ENCODE measurements at regions of chrX and their contacts with region 1.

Region 1: GRCh38 chrX:53093748-53094583 is at the start of gene KANTR:
- DNase-seq: peak; percentile 86
- ATAC-seq: peak; percentile 89
- H3K4me3 Mint-ChIP-seq: peak within 1 kb of the TSS; percentile 90
- H3K27ac Mint-ChIP-seq: peak within 1 kb of the TSS; percentile 91
- H3K4me1 Mint-ChIP-seq: peaks cover 19% of the 10 kb centered on the region
- H3K27me3 Mint-ChIP-seq: no peaks in the 10 kb centered on the region
- total RNA-seq, gene KANTR: 10.3 to 12.3 TPM

Region 2: GRCh38 chrX:52574416-52575275 is 519.3 kb before region 1 on chrX:
- CTCF ChIA-PET with region 1: no interaction called
- POLR2A ChIA-PET with region 1: no interaction called
- intact Hi-C with region 1: loop called in 1 of 2 experiments (anchors 5 kb)
- DNase-seq: peak; percentile 45
- ATAC-seq: no peak
- H3K4me3 Mint-ChIP-seq: no peak overlapping the region
- H3K27ac Mint-ChIP-seq: no peak overlapping the region
- H3K4me1 Mint-ChIP-seq: peaks cover 2% of the 10 kb centered on the region
- H3K27me3 Mint-ChIP-seq: no peaks in the 10 kb centered on the region

Region 3: GRCh38 chrX:53071604-53072417 is 22.2 kb before region 1 on chrX:
- CTCF ChIA-PET with region 1: interaction called, 5 read pairs
- POLR2A ChIA-PET with region 1: no interaction called
- intact Hi-C with region 1: loop called (anchors 1 kb)
- DNase-seq: peak; percentile 77
- ATAC-seq: peak; percentile 85
- H3K4me3 Mint-ChIP-seq: peak overlapping the region; percentile 87
- H3K27ac Mint-ChIP-seq: peak overlapping the region; percentile 89
- H3K4me1 Mint-ChIP-seq: peaks cover 10% of the 10 kb centered on the region
- H3K27me3 Mint-ChIP-seq: no peaks in the 10 kb centered on the region

Region 4: GRCh38 chrX:53081925-53082772 is 11.8 kb before region 1 on chrX and contains the start of gene TSPYL2:
- CTCF ChIA-PET with region 1: interaction called, 5 read pairs
- POLR2A ChIA-PET with region 1: interaction called, 6 read pairs
- intact Hi-C with region 1: loop called in 1 of 2 experiments (anchors 1 kb)
- DNase-seq: peak; percentile 96
- ATAC-seq: peak; percentile 91
- H3K4me3 Mint-ChIP-seq: peak within 1 kb of the TSS; percentile 91
- H3K27ac Mint-ChIP-seq: peak within 1 kb of the TSS; percentile 95
- H3K4me1 Mint-ChIP-seq: peaks cover 46% of the 10 kb centered on the region
- H3K27me3 Mint-ChIP-seq: no peaks in the 10 kb centered on the region
- total RNA-seq, gene TSPYL2: 56.7 to 73.3 TPM

Region 5: GRCh38 chrX:53190363-53190960 is 96.5 kb after region 1 on chrX:
- CTCF ChIA-PET with region 1: no interaction called
- POLR2A ChIA-PET with region 1: no interaction called
- intact Hi-C with region 1: loop called in 1 of 2 experiments (anchors 10 kb)
- DNase-seq: no peak
- ATAC-seq: no peak
- H3K4me3 Mint-ChIP-seq: no peak overlapping the region
- H3K27ac Mint-ChIP-seq: no peak overlapping the region
- H3K4me1 Mint-ChIP-seq: peaks cover 25% of the 10 kb centered on the region
- H3K27me3 Mint-ChIP-seq: no peaks in the 10 kb centered on the region

Region 6: GRCh38 chrX:53224860-53225797 is 131.2 kb after region 1 on chrX and contains the start of gene KDM5C:
- CTCF ChIA-PET with region 1: no interaction called
- POLR2A ChIA-PET with region 1: no interaction called
- intact Hi-C with region 1: loop called (anchors 1 to 5 kb)
- DNase-seq: peak; percentile 90
- ATAC-seq: peak; percentile 79
- H3K4me3 Mint-ChIP-seq: peak within 1 kb of the TSS; percentile 79
- H3K27ac Mint-ChIP-seq: peak within 1 kb of the TSS; percentile 92
- H3K4me1 Mint-ChIP-seq: peaks cover 29% of the 10 kb centered on the region
- H3K27me3 Mint-ChIP-seq: no peaks in the 10 kb centered on the region
- total RNA-seq, gene KDM5C: 84.6 to 96.5 TPM

Region 7: GRCh38 chrX:53433651-53434639 is 340.0 kb after region 1 on chrX and contains the start of gene HSD17B10:
- CTCF ChIA-PET with region 1: no interaction called
- POLR2A ChIA-PET with region 1: no interaction called
- intact Hi-C with region 1: no loop called
- DNase-seq: peak; percentile 93
- ATAC-seq: peak; percentile 95
- H3K4me3 Mint-ChIP-seq: peak within 1 kb of the TSS; percentile 98
- H3K27ac Mint-ChIP-seq: peak within 1 kb of the TSS; percentile 92
- H3K4me1 Mint-ChIP-seq: peaks cover 27% of the 10 kb centered on the region
- H3K27me3 Mint-ChIP-seq: peaks cover 2% of the 10 kb centered on the region
- total RNA-seq, gene HSD17B10: 89.0 to 92.7 TPM

Measured in activated CD4-positive, alpha-beta T cell treated with anti-CD3 and anti-CD28 coated beads for 36 hours (primary cell).